PC-9 (cell line): ENCODE measurements at regions of chr3 and their contacts with region 1.

Region 1: GRCh38 chr3:187841598-187841959 is 96.3 kb upstream of the BCL6 start:
- DNase-seq: peak; percentile 53 to 89
- H3K4me3 ChIP-seq: no peak overlapping the region
- H3K27ac ChIP-seq: peak overlapping the region; percentile 14
- H3K4me1 ChIP-seq: peaks cover 22% of the 10 kb centered on the region
- H3K27me3 ChIP-seq: no peaks in the 10 kb centered on the region
- CTCF ChIP-seq: no peak

Region 2: GRCh38 chr3:187758318-187758955 is 83.1 kb before region 1 on chr3:
- CTCF ChIA-PET with region 1: no interaction called
- POLR2A ChIA-PET with region 1: no interaction called
- intact Hi-C with region 1: no loop called
- DNase-seq: no peak
- H3K4me3 ChIP-seq: no peak overlapping the region
- H3K27ac ChIP-seq: no peak overlapping the region
- H3K4me1 ChIP-seq: no peaks in the 10 kb centered on the region
- H3K27me3 ChIP-seq: no peaks in the 10 kb centered on the region
- CTCF ChIP-seq: no peak

Region 3: GRCh38 chr3:188510366-188510765 is 668.8 kb after region 1 on chr3:
- CTCF ChIA-PET with region 1: no interaction called
- POLR2A ChIA-PET with region 1: interaction called, 37 read pairs
- intact Hi-C with region 1: no loop called
- DNase-seq: peak in 1 of 2 experiments; percentile 42
- H3K4me3 ChIP-seq: no peak overlapping the region
- H3K27ac ChIP-seq: no peak overlapping the region
- H3K4me1 ChIP-seq: no peaks in the 10 kb centered on the region
- H3K27me3 ChIP-seq: no peaks in the 10 kb centered on the region
- CTCF ChIP-seq: no peak

Region 4: GRCh38 chr3:188607805-188608315 is 766.3 kb after region 1 on chr3:
- CTCF ChIA-PET with region 1: no interaction called
- POLR2A ChIA-PET with region 1: no interaction called
- intact Hi-C with region 1: no loop called
- DNase-seq: no peak
- H3K4me3 ChIP-seq: no peak overlapping the region
- H3K27ac ChIP-seq: no peak overlapping the region
- H3K4me1 ChIP-seq: no peaks in the 10 kb centered on the region
- H3K27me3 ChIP-seq: no peaks in the 10 kb centered on the region
- CTCF ChIP-seq: no peak